ENCODE measurements at regions of chr6 and their contacts with region 1.

Region 1: GRCh38 chr6:163413345-163414116 is 987 bp upstream of the QKI start:
- DNase-seq: peak; percentile 81 to 86
- ATAC-seq: peak; percentile 60 to 62
- H3K4me3 ChIP-seq: peak overlapping the region; percentile 76 to 89 (median 80)
- H3K27ac ChIP-seq: peak overlapping the region; percentile 96 to 99 (median 99)
- H3K4me1 ChIP-seq: peaks cover 0 to 11% of the 10 kb centered on the region in 2 donors
- H3K27me3 ChIP-seq: no peaks in the 10 kb centered on the region
- CTCF ChIP-seq: peak in 2 of 5 experiments; percentile 7 to 12
- POLR2A ChIP-seq: peak; percentile 96 to 98

Region 2: DNA sequence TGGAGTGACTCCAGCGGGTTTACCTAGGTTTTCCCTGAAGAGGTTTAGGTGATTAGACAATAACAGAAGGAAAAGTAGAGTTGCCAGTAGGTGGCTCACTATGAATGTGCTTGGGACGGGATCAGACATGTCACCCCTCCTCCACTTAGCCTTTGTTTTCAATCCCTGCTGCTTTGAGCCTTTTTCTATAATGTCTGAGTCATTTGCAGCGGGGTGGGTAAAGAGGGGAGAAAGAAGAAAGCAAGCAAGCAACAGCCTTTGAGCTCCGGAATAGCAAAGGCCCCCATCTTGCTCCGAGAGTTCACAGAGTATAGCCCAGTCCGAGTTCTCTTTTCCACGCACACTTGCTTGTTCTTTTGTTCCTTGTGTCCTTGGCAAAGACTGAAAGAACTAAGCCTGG is 556.6 kb before region 1 on chr6:
- in situ Hi-C with region 1: loop called in 2 of 4 experiments (anchors 25 kb)
- intact Hi-C with region 1: no loop called
- DNase-seq: peak in 1 of 2 donors; percentile 14
- ATAC-seq: peak; percentile 93 to 97
- H3K4me3 ChIP-seq: peak overlapping the region; percentile 34 to 51 (median 46)
- H3K27ac ChIP-seq: peak overlapping the region; percentile 60 to 72 (median 68)
- H3K4me1 ChIP-seq: peaks cover 0 to 4% of the 10 kb centered on the region in 2 donors
- H3K27me3 ChIP-seq: no peaks in the 10 kb centered on the region
- CTCF ChIP-seq: peak in 4 of 5 experiments; percentile 24 to 61 (median 48)
- POLR2A ChIP-seq: no peak

Region 3: GRCh38 chr6:163291622-163292021 is 121.9 kb before region 1 on chr6:
- in situ Hi-C with region 1: no loop called
- intact Hi-C with region 1: loop called (anchors 2 kb)
- DNase-seq: no peak
- ATAC-seq: no peak
- H3K4me3 ChIP-seq: no peak overlapping the region
- H3K27ac ChIP-seq: peak overlapping the region; percentile 81 to 85 (median 84)
- H3K4me1 ChIP-seq: peaks cover 10 to 13% of the 10 kb centered on the region in 2 donors
- H3K27me3 ChIP-seq: no peaks in the 10 kb centered on the region
- CTCF ChIP-seq: no peak
- POLR2A ChIP-seq: no peak

Region 4: DNA sequence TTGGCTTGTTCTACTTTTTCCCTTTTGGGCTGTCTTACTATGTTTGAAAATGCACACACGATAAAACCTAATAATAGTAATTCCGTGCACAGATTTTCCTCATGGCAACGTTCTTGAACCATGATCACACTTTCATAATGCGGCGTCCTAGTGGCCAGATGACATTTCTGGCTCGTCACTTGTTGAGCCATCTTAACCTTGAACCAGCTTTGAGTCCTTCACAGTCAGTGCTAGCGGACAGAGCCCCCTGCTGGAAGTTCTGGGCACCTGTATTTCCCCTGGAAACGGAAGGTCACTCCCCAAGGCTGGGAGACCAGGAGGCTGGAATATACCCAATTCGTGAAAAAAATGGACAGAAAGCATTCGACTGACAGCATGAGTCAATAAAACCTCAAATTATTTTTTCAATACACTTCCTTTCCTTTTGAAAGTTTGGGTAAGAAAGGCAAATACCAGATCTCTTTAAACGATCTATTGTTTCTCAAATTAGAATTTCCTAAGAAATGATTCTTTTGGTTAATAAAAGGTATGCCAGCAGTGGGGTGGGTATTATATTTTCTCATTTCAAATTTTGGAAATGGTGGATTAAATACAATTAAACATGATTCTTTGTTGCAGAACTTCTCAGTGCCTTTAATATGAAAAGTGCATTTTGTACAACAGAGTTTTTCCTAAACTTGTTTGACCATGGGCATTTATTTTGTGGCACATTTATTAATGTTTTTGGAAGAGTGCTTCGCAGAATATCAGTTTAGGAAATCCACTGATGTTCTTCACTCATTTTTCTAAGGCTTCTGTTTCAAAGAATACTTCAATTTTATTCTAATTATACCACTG is 543.3 kb after region 1 on chr6:
- in situ Hi-C with region 1: no loop called
- intact Hi-C with region 1: loop called (anchors 2 kb)
- DNase-seq: peak; percentile 78 to 91
- ATAC-seq: peak; percentile 88 to 96
- H3K4me3 ChIP-seq: peak overlapping the region in 1 of 4 donors; percentile 23
- H3K27ac ChIP-seq: peak overlapping the region; percentile 78 to 99 (median 92)
- H3K4me1 ChIP-seq: peaks cover 38 to 52% of the 10 kb centered on the region in 2 donors
- H3K27me3 ChIP-seq: no peaks in the 10 kb centered on the region
- CTCF ChIP-seq: peak; percentile 94 to 96 (median 95)
- POLR2A ChIP-seq: no peak

Region 5: DNA sequence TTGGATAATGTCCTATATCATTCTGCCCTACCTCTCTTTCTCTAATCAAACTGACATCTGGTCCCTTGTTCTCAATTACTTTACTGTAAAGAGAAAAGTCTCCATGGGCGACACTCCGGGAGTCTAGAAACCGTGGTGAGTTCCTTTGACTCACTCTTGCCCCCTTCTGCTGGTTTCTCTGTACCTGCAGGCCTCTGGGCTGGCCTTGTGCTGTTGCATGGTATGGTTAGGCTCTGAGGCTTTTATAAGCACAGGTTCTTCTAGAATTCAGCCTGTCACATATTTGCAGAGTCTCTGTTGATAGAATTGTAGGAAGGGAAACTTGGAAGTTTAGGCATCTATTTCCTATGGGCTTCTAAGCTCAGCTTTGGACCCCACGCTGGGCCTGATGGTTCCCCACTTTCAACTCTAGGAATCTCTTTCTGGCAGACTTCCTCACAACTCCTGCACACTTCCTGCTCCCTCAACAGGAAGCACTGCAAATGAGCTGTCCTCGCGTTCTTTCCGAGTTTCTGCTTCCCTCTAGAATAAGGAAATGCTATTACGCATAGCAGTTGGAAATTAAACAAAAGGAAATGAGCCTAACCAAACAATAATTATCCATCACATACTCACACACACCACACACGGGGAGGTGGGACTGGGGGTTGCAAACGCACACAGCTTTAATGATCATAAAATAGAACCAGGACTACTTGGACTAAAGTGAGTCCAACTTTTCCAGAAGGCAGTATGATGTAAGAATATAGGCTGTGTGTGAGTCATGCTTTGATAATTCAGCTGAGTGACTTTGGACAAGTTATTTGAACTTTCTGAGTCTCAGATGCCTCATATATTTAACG is 684.2 kb after region 1 on chr6:
- in situ Hi-C with region 1: no loop called
- intact Hi-C with region 1: loop called (anchors 2 kb)
- DNase-seq: peak in 1 of 2 donors; percentile 68
- ATAC-seq: peak; percentile 41 to 62
- H3K4me3 ChIP-seq: no peak overlapping the region
- H3K27ac ChIP-seq: peak overlapping the region; percentile 84 to 96 (median 89)
- H3K4me1 ChIP-seq: peaks cover 33 to 37% of the 10 kb centered on the region in 2 donors
- H3K27me3 ChIP-seq: no peaks in the 10 kb centered on the region
- CTCF ChIP-seq: peak in 3 of 5 experiments; percentile 32 to 47 (median 38)
- POLR2A ChIP-seq: no peak

Region 6: GRCh38 chr6:165231581-165232561 is 1818.3 kb after region 1 on chr6:
- in situ Hi-C with region 1: loop called in 2 of 4 experiments (anchors 25 kb)
- intact Hi-C with region 1: no loop called
- DNase-seq: peak; percentile 22 to 51
- ATAC-seq: peak; percentile 92 to 96
- H3K4me3 ChIP-seq: peak overlapping the region; percentile 2 to 37 (median 18)
- H3K27ac ChIP-seq: peak overlapping the region; percentile 79 to 86 (median 84)
- H3K4me1 ChIP-seq: peaks cover 13 to 18% of the 10 kb centered on the region in 2 donors
- H3K27me3 ChIP-seq: no peaks in the 10 kb centered on the region
- CTCF ChIP-seq: peak; percentile 57 to 76 (median 74)
- POLR2A ChIP-seq: no peak

Measured in gastrocnemius medialis (tissue), 4 donors.